Esophagus muscularis mucosa (tissue), 4 donors: ENCODE measurements at regions of chrX and their contacts with region 1.

Region 1: DNA sequence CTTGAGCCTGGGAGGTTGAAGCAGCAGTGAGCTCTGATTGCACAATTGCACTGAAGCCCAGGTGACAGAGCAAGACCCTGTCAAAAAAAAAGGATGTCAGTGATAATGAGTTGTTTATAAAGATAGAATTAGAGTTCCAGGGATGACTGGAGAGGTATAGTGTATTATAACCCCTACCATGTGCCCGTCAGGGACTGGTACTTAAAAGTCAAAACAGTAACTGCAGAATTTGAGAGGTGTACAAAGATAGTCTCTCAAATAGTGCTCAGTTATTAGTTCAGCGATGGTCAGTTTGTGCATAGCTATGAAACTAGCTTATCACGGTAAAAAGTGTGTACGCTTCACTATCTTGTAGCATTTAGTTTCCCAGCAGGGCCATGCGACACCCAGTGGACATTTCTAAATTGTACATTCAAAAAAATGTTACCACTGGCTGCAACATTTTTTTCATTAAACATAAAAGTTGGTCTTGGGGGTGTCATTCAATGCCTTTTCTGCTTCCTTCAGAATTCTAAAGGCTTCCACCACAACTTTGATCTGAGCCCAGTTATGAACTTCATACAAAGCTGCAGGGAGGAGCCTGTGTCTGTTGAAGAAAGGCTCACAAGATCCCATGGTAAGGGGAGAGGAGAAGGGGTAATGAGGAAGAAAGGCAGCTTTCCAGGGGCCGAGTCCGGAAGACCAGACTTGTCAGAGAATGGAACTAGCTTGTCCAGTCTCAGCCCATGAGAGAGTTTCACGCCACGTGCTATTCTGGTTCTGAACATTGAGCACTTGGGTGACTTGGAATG is 9.2 kb upstream of the GYG2 start:
- DNase-seq: no peak
- H3K4me3 ChIP-seq: no peak overlapping the region
- H3K27ac ChIP-seq: no peak overlapping the region
- H3K4me1 ChIP-seq: no peaks in the 10 kb centered on the region
- H3K27me3 ChIP-seq: no peaks in the 10 kb centered on the region
- CTCF ChIP-seq: peak in 2 of 3 experiments; percentile 34
- EP300 ChIP-seq: no peak
- POLR2A ChIP-seq: no peak

Region 2: GRCh38 chrX:2643880-2644279 is 175.7 kb before region 1 on chrX:
- intact Hi-C with region 1: loop called (anchors 2 kb)
- DNase-seq: no peak
- H3K4me3 ChIP-seq: no peak overlapping the region
- H3K27ac ChIP-seq: no peak overlapping the region
- H3K4me1 ChIP-seq: no peaks in the 10 kb centered on the region
- H3K27me3 ChIP-seq: no peaks in the 10 kb centered on the region
- CTCF ChIP-seq: no peak
- EP300 ChIP-seq: no peak
- POLR2A ChIP-seq: no peak

Region 3: GRCh38 chrX:2707334-2707760 is 112.2 kb before region 1 on chrX:
- intact Hi-C with region 1: loop called (anchors 10 kb)
- DNase-seq: peak; percentile 95
- H3K4me3 ChIP-seq: peak overlapping the region in 2 of 4 donors; percentile 10 to 12
- H3K27ac ChIP-seq: peak overlapping the region; percentile 2 to 86 (median 57)
- H3K4me1 ChIP-seq: peaks cover 80 to 97% (median 89%) of the 10 kb centered on the region in 4 donors
- H3K27me3 ChIP-seq: no peaks in the 10 kb centered on the region
- CTCF ChIP-seq: no peak
- EP300 ChIP-seq: peak; percentile 59
- POLR2A ChIP-seq: no peak